ENCODE measurements at regions of chr14 and their contacts with region 1.

Region 1: DNA sequence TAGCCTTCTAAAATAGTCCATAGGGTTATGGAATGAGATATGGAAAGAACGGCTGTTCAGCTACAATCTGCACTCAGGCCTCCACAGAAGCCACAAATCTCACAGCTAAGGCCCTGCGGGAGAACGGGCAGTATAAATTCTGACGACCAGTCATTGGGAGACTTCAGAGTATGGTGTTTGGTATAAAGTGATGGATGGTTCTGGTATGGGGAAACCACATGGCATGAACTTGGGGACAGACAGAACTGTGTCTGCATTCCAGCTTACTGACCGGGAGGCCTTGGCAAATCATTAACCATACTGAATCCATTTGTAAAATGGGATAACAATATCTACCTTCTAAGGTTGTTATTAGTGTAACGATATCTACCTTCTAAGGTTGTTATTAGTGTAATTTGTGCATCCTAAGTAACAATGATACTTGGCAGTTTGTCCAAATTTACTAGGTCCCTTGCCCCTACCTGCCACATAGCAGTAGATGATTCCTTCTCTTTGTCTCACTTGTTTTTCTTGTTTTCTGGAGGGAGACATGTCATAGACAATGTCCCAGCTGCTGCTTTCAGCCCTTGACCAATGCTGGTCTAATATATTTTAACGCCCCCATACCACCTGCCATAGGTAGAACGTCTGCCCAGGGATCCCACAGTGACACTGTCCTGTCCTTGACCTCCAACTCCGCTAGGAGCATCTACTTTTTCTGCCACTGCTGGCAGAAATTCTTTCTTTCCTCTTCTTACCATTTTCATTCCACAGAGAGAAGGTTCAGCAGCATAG is 6.8 kb downstream of the CDKL1 start:
- DNase-seq: no peak
- ATAC-seq: no peak
- H3K4me3 ChIP-seq: no peak overlapping the region
- H3K27ac ChIP-seq: no peak overlapping the region
- H3K4me1 ChIP-seq: peaks cover 0 to 4% (median 0%) of the 10 kb centered on the region in 9 donors
- H3K27me3 ChIP-seq: no peaks in the 10 kb centered on the region
- CTCF ChIP-seq: no peak

Region 2: DNA sequence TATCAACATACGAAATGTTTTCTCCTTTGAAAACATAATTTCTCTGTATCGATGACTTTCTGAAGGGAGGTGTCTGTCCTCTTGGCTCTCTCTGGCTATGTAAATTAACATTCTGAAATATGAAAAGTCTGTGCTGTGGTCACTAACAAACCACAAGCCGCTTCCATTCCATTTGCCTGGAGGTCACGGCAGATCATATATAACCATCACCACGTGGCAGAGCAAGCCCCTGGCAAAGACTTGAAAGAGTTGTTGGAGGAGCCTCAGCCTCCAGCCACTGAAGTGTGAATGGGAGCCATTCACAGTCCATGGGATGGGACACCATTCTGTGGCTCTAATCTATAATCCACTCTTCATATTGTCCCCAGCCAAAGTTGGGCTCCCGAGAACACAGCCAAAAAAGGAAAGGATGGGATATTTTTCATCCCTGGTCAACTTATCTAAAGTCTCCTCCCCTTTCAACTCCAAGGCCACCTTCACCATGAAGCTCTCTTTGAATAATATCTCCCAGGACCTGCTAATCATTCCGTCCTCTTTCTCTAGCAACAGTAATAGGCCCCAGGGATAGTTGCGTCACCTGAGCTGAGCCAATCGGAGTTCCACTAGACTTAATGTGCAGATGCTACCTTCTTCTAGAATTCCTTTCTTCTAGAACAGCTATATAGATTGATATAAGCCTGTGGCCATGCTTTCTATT is 32.6 kb before region 1 on chr14:
- intact Hi-C with region 1: loop called in 1 of 10 experiments (anchors 5 kb)
- DNase-seq: no peak
- ATAC-seq: no peak
- H3K4me3 ChIP-seq: no peak overlapping the region
- H3K27ac ChIP-seq: no peak overlapping the region
- H3K4me1 ChIP-seq: no peaks in the 10 kb centered on the region
- H3K27me3 ChIP-seq: no peaks in the 10 kb centered on the region
- CTCF ChIP-seq: no peak

Region 3: DNA sequence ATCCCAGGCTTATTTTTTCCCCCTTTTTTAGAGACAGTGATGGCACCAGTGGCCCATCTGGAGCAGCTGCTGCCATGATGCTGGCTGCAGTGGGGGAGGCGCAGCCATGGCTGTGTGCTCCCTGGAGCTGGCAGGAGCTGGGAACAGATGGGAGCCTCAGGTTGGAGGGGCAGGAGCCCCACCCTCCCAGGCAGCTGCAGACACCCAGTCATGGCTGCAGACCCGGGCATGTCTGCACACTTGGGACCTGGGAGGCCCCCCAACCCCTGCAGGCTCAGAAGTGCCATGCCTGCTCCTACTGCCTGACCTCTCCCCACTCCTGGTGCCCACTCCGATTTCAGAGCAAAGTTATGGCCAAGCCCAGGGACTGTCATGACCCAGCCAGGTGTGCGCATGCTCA is 18.3 kb before region 1 on chr14:
- intact Hi-C with region 1: no loop called
- DNase-seq: no peak
- ATAC-seq: peak in 1 of 8 donors; percentile 12
- H3K4me3 ChIP-seq: no peak overlapping the region
- H3K27ac ChIP-seq: no peak overlapping the region
- H3K4me1 ChIP-seq: peaks cover 0 to 6% (median 0%) of the 10 kb centered on the region in 9 donors
- H3K27me3 ChIP-seq: no peaks in the 10 kb centered on the region
- CTCF ChIP-seq: no peak

Measured in heart right ventricle (tissue), 16 donors.